ENCODE measurements at regions of chr15 and their contacts with region 1.

Region 1: GRCh38 chr15:98668566-98669308 is 20.4 kb downstream of the IGF1R start:
- DNase-seq: no peak
- ATAC-seq: peak in 5 of 8 donors; percentile 12 to 31 (median 21)
- H3K4me3 ChIP-seq: no peak overlapping the region
- H3K27ac ChIP-seq: peak overlapping the region in 8 of 10 donors; percentile 21 to 87 (median 72)
- H3K4me1 ChIP-seq: peaks cover 16 to 98% (median 77%) of the 10 kb centered on the region in 9 donors
- H3K27me3 ChIP-seq: no peaks in the 10 kb centered on the region
- CTCF ChIP-seq: no peak

Region 2: GRCh38 chr15:98713585-98714001 is 44.9 kb after region 1 on chr15:
- intact Hi-C with region 1: loop called in 1 of 10 experiments (anchors 5 kb)
- DNase-seq: peak in 1 of 2 donors; percentile 33
- ATAC-seq: peak in 4 of 8 donors; percentile 29 to 49 (median 40)
- H3K4me3 ChIP-seq: no peak overlapping the region
- H3K27ac ChIP-seq: peak overlapping the region; percentile 60 to 90 (median 86)
- H3K4me1 ChIP-seq: peaks cover 19 to 73% (median 54%) of the 10 kb centered on the region in 9 donors
- H3K27me3 ChIP-seq: no peaks in the 10 kb centered on the region
- CTCF ChIP-seq: no peak

Region 3: DNA sequence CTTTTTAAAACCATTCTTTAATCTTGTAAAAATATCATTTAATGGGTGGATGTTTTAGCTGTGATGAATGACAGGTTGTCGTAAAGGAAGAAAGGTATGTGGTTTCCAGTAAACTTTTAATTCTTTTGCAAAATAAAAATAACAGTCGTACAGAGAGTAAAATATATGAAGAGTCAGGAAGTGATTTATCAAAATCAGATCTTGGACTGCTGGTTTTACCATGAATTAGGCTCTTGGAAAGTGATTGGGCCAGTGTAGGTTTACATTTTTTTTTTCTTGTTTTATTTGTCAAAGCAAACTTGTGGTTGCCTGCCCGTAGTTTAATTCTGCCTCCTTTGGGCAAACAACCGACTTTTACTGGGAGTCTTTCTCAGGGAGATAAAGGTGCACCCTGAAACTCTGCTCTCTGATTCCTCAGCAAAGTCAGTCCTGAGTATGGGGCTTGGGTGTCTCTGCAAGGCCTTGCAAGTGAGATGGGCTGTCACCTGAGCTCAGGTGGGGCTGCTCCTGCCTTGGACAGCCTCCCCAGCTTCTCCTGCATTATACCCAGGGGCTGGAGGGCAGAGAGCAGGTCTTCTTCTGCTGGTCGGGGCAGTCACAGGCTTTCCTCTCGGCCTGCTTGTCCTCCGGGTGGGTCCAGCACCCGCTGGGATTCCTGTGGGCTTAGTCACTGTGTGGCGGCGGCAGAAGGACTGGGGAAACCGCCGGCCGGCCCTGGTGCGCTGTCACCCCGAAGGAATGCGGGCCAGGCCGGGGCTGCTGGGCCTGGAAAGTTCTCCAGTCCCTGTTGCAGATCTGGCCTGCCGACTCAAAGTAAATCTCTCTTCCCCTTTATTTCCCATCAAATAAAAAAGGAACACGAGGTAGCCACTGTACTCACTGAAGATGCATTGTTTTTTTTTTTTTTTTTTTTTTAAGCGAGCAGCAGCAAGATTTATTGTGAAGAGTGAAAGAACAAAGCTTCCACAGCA is 58.7 kb after region 1 on chr15:
- intact Hi-C with region 1: loop called in 1 of 10 experiments (anchors 10 kb)
- DNase-seq: peak; percentile 85
- ATAC-seq: peak; percentile 90 to 97 (median 92)
- H3K4me3 ChIP-seq: peak overlapping the region in 2 of 10 donors; percentile 16 to 23
- H3K27ac ChIP-seq: peak overlapping the region; percentile 67 to 96 (median 88)
- H3K4me1 ChIP-seq: peaks cover 22 to 99% (median 83%) of the 10 kb centered on the region in 9 donors
- H3K27me3 ChIP-seq: no peaks in the 10 kb centered on the region
- CTCF ChIP-seq: no peak

Region 4: DNA sequence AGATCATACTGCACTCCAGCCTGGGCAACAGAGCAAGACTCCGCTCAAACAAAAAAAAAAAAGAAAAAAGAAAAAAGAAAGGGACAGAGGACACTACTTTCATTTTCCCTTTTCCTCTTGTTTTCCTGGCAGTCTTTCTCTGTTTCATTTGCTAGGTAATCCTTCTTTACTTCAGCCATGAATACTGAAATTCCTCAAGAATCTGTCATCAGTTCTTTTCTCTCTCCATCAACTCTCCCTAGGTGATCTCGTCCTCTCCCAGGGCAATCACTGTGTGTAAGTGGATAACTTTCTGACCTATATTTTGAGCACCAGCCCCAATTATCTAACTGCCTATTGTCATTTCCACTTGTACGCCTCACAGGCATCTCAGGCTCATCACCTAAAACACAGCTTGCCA is 529.1 kb after region 1 on chr15:
- intact Hi-C with region 1: no loop called
- DNase-seq: no peak
- ATAC-seq: no peak
- H3K4me3 ChIP-seq: no peak overlapping the region
- H3K27ac ChIP-seq: no peak overlapping the region
- H3K4me1 ChIP-seq: no peaks in the 10 kb centered on the region
- H3K27me3 ChIP-seq: no peaks in the 10 kb centered on the region
- CTCF ChIP-seq: no peak